ENCODE measurements at regions of chr3 and their contacts with region 1.

Region 1: GRCh38 chr3:45938864-45939263 is 4.4 kb upstream of the CXCR6 start:
- DNase-seq: peak; percentile 91
- H3K4me3 Mint-ChIP-seq: no peak overlapping the region
- H3K27ac Mint-ChIP-seq: no peak overlapping the region
- H3K4me1 Mint-ChIP-seq: peaks cover 34% of the 10 kb centered on the region
- H3K27me3 Mint-ChIP-seq: peaks cover 2% of the 10 kb centered on the region

Region 2: GRCh38 chr3:45776611-45777010 is 162.3 kb before region 1 on chr3:
- CTCF ChIA-PET with region 1: no interaction called
- POLR2A ChIA-PET with region 1: no interaction called
- intact Hi-C with region 1: no loop called
- DNase-seq: no peak
- H3K4me3 Mint-ChIP-seq: no peak overlapping the region
- H3K27ac Mint-ChIP-seq: no peak overlapping the region
- H3K4me1 Mint-ChIP-seq: peaks cover 13% of the 10 kb centered on the region
- H3K27me3 Mint-ChIP-seq: peaks cover 5% of the 10 kb centered on the region

Region 3: GRCh38 chr3:45923755-45924154 is 15.1 kb before region 1 on chr3:
- CTCF ChIA-PET with region 1: interaction called, 13 read pairs
- POLR2A ChIA-PET with region 1: no interaction called
- intact Hi-C with region 1: no loop called
- DNase-seq: peak; percentile 39
- H3K4me3 Mint-ChIP-seq: no peak overlapping the region
- H3K27ac Mint-ChIP-seq: no peak overlapping the region
- H3K4me1 Mint-ChIP-seq: peaks cover 9% of the 10 kb centered on the region
- H3K27me3 Mint-ChIP-seq: no peaks in the 10 kb centered on the region

Region 4: DNA sequence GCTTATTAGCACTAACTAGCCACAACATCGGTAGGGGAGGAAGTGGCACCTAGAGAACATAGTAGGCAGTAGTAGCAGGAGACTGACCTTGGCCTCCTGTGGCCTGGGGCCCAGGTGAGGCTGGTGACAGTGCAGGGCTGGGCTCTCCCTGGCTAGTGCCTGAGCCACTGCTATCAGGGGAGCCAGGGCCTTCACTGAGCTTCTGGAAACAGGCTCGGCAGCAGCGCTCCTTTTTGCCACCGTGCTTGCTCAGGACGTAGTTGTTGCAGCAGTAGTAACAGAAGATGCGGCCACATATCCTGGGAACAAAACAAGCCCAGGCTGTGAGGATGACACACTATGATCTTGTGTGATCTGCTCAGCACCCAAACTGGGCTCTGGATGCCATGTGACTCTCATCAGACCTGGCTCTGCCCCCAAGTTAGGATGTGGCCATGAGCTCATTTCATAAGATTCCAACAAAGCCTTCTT is 19.5 kb after region 1 on chr3:
- CTCF ChIA-PET with region 1: interaction called, 49 read pairs
- POLR2A ChIA-PET with region 1: interaction called, 4 read pairs
- intact Hi-C with region 1: no loop called
- DNase-seq: no peak
- H3K4me3 Mint-ChIP-seq: no peak overlapping the region
- H3K27ac Mint-ChIP-seq: no peak overlapping the region
- H3K4me1 Mint-ChIP-seq: peaks cover 28% of the 10 kb centered on the region
- H3K27me3 Mint-ChIP-seq: no peaks in the 10 kb centered on the region

Region 5: DNA sequence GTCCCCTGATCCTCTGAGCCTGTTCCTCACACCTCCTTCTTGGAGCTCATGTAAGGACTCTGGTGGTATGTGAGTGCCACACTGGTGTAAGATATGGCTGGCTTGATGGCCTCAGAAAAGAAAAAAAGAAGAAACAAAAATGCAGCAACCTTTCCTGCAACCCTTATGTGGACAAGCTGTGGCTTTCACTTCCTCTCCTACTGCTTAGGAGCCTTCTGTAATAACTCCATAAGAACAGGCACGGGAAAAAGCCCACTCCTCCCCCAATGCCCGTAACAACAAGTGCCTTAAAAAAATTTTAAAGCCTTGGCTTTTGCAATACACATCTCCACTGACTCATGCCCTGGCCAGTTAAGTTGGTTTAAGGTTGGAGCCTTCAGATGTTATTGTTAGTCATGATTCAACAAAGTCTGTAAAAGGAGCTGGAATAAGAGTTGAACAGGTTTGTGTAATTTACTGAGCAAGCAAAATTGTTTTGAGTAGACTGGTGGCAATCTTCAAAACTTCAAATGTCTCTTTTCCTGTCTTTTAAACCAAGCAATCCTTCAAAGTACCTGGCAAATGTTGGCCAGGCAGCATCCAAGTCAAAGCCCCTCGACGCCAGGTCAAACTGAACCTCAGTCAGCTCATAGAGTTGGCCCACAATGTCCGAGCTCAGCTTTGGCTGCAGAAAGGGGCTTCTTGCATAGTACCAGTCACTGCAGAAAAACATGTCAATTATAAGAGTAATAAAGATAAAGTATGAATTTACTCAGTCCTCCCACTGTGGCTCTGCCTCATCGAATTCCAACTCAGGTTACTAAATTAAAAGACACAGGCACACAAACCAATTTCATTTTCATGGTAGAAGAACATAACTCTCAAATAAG is 33.9 kb after region 1 on chr3:
- CTCF ChIA-PET with region 1: interaction called, 11 read pairs
- POLR2A ChIA-PET with region 1: interaction called, 3 read pairs
- intact Hi-C with region 1: no loop called
- DNase-seq: peak; percentile 41
- H3K4me3 Mint-ChIP-seq: no peak overlapping the region
- H3K27ac Mint-ChIP-seq: peak overlapping the region; percentile 70
- H3K4me1 Mint-ChIP-seq: peaks cover 66% of the 10 kb centered on the region
- H3K27me3 Mint-ChIP-seq: no peaks in the 10 kb centered on the region

Region 6: GRCh38 chr3:45995236-45996192 is 56.6 kb after region 1 on chr3 and contains the start of gene FYCO1:
- CTCF ChIA-PET with region 1: interaction called, 5 read pairs
- POLR2A ChIA-PET with region 1: interaction called, 13 read pairs
- intact Hi-C with region 1: loop called (anchors 1 kb)
- DNase-seq: peak; percentile 93
- H3K4me3 Mint-ChIP-seq: peak within 1 kb of the TSS; percentile 85
- H3K27ac Mint-ChIP-seq: peak within 1 kb of the TSS; percentile 87
- H3K4me1 Mint-ChIP-seq: peaks cover 44% of the 10 kb centered on the region
- H3K27me3 Mint-ChIP-seq: no peaks in the 10 kb centered on the region
- total RNA-seq, gene FYCO1: 13.7 to 14.0 TPM

Region 7: DNA sequence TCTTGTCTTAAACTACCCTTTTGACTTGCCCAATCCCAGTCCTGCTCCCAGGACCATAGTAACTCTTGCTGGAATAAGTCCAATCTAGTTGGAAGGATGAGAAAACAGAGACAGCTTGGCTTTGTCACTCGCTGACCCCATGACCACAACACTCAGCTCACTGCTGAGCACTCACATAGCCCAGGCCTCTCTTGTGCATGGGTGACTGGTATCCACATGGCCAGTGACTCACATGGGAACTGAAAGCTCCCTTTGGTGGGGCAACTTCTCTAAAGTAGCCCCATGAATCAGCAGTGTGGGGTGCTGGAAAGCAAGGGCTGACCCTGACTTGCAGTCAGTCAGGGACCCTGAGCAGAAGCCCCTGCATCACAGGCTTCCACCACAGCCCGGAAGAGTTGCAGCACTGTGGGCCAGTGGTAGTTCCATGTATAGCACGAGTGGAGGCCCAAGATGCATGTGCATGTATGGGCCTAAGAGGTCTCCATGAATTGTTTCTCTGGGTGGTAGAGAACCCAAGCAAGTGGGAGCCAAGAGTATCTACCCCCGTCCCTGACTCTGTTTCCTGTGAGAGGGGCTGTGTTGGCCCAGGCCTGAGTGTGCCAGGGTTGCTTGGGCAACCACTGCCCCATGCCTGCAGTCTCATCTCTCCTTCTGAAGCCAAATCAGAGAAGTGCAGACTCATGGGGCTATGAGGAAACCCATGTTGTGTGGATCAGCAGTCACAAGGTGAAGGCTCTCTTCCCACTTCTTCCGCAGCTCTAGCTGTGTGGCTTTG is 150.6 kb after region 1 on chr3:
- CTCF ChIA-PET with region 1: interaction called, 23 read pairs
- POLR2A ChIA-PET with region 1: no interaction called
- intact Hi-C with region 1: no loop called
- DNase-seq: peak; percentile 65
- H3K4me3 Mint-ChIP-seq: no peak overlapping the region
- H3K27ac Mint-ChIP-seq: no peak overlapping the region
- H3K4me1 Mint-ChIP-seq: peaks cover 19% of the 10 kb centered on the region
- H3K27me3 Mint-ChIP-seq: peaks cover 33% of the 10 kb centered on the region

Region 8: DNA sequence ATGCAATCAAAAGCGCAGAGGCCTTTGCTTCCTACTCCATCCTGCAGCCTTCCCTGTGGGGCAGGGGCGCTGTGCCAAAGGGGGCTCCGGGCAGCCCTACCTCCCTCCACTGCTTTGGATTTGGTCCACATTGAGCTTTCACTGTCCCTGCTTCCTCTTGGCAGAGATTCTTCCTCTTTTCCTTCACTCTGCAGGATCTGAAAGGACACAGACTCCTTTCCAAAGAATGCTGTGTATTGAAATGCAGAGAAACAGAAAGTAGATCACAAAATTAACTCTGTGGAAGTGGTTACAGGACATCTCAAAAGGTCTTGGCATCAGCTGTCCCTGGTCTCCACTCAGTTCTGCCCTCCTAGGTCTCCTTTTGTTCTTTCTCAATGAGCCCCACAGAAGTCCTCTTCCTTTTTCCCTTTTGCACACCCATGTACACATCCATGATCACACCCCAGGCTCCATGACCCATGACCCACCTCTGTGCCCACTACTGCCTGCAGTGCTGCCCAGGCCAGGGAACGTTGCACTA is 205.1 kb after region 1 on chr3:
- CTCF ChIA-PET with region 1: no interaction called
- POLR2A ChIA-PET with region 1: no interaction called
- intact Hi-C with region 1: no loop called
- DNase-seq: no peak
- H3K4me3 Mint-ChIP-seq: no peak overlapping the region
- H3K27ac Mint-ChIP-seq: no peak overlapping the region
- H3K4me1 Mint-ChIP-seq: peaks cover 14% of the 10 kb centered on the region
- H3K27me3 Mint-ChIP-seq: no peaks in the 10 kb centered on the region